PC-3 (cell line): ENCODE measurements at regions of chr5 and their contacts with region 1.

Region 1: DNA sequence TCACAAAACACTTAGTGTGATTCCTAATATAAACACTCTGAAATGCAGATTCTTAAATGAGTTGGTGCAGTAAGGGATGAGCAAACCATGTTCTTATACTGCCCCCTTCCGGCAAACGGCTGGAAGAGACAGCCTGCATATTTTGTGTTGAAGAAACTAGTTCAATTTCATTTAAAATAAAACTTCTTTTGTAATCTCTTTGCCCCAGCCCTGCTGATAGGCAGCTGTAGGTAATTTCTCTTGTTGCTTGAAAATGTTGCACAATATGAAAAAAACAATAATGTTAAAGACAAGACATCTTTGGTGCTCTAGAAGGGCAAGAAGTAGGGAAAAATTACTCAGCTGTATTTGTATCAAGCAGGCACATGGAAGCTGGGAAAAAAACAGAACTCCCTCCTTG is 89.7 kb upstream of the CCNG1 start:
- DNase-seq: peak; percentile 82
- ATAC-seq: peak; percentile 85
- H3K4me3 ChIP-seq: no peak overlapping the region
- H3K27ac ChIP-seq: no peak overlapping the region
- H3K4me1 ChIP-seq: peaks cover 10% of the 10 kb centered on the region
- H3K27me3 ChIP-seq: no peaks in the 10 kb centered on the region
- CTCF ChIP-seq: peak; percentile 94

Region 2: DNA sequence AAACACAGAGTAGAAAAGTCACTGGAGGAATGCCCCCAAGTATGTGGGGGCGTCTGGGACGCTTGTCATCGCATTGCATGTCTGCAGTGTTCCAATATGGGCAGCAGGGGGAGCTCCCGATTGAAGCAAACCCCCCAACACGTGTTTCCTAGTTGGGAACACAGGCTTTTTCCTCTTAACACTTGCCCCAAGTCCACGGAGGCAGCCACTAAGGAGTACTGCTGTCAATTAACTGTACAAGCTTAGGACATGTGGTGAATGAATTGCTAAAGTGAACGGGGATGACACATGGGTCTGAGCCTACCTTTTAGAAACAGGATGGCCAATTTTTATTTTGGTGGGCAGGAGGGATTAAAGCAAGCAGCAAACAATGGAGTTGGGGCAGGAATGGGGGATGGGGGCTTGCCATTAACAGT is 1803.3 kb before region 1 on chr5:
- CTCF ChIA-PET with region 1: no interaction called
- POLR2A ChIA-PET with region 1: no interaction called
- intact Hi-C with region 1: loop called (anchors 5 kb)
- DNase-seq: peak; percentile 33
- ATAC-seq: no peak
- H3K4me3 ChIP-seq: no peak overlapping the region
- H3K27ac ChIP-seq: no peak overlapping the region
- H3K4me1 ChIP-seq: no peaks in the 10 kb centered on the region
- H3K27me3 ChIP-seq: no peaks in the 10 kb centered on the region
- CTCF ChIP-seq: peak; percentile 78

Region 3: DNA sequence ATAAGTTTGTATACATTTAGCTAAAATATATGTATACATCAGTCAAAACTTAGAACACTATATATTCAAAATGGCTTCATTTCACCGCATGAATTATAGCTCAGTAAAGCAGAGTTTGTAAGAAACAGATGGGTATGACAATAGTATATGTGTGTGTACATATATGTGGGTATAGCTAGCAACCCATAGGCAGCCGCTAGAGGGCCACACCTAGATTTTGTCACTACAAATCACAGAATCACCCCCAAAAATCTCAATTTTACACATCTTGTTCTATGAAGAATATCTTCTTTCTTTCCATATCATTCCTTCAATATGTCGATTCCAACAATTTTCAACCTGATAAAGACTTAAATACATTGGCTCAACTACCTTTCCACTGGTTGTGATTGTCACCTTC is 268.1 kb before region 1 on chr5:
- CTCF ChIA-PET with region 1: no interaction called
- POLR2A ChIA-PET with region 1: no interaction called
- intact Hi-C with region 1: loop called (anchors 1 kb)
- DNase-seq: peak; percentile 40
- ATAC-seq: peak; percentile 53; the same call in 1 of the 2 replicates
- H3K4me3 ChIP-seq: no peak overlapping the region
- H3K27ac ChIP-seq: no peak overlapping the region
- H3K4me1 ChIP-seq: no peaks in the 10 kb centered on the region
- H3K27me3 ChIP-seq: no peaks in the 10 kb centered on the region
- CTCF ChIP-seq: peak; percentile 84

Region 4: DNA sequence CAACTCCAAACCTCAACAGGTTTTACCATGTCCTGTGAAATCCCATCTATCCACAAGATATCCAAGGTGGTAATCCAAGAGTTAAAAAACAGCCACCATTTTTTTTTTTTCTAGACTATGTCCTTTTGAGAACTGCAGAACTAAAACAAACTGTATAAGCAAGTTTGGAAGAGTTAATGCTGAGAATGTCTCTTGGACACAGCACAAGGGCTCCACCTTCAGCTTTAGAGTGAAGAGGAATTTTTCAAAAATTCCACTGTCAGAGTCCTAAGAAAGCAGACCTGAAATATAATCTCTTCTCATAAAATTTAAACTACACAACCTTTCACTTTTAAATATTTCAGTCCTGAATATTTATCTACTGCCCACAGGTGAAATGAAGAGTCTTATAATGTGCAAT is 78.0 kb before region 1 on chr5:
- CTCF ChIA-PET with region 1: no interaction called
- POLR2A ChIA-PET with region 1: no interaction called
- intact Hi-C with region 1: loop called (anchors 2 kb)
- DNase-seq: peak; percentile 77
- ATAC-seq: peak; percentile 93
- H3K4me3 ChIP-seq: peak overlapping the region; percentile 27; the same call in 1 of the 2 replicates
- H3K27ac ChIP-seq: no peak overlapping the region
- H3K4me1 ChIP-seq: peaks cover 18% of the 10 kb centered on the region
- H3K27me3 ChIP-seq: no peaks in the 10 kb centered on the region
- CTCF ChIP-seq: peak; percentile 77

Region 5: GRCh38 chr5:163306421-163306820 is 41.2 kb before region 1 on chr5:
- CTCF ChIA-PET with region 1: interaction called, 9 read pairs
- POLR2A ChIA-PET with region 1: no interaction called
- intact Hi-C with region 1: loop called (anchors 1 kb)
- DNase-seq: peak; percentile 57
- ATAC-seq: peak; percentile 63
- H3K4me3 ChIP-seq: no peak overlapping the region
- H3K27ac ChIP-seq: no peak overlapping the region
- H3K4me1 ChIP-seq: no peaks in the 10 kb centered on the region
- H3K27me3 ChIP-seq: peaks cover 19% of the 10 kb centered on the region; the same call in 1 of the 2 replicates
- CTCF ChIP-seq: peak; percentile 75